GM12878 (cell line): ENCODE measurements at regions of chrX and their contacts with region 1.

Region 1: DNA sequence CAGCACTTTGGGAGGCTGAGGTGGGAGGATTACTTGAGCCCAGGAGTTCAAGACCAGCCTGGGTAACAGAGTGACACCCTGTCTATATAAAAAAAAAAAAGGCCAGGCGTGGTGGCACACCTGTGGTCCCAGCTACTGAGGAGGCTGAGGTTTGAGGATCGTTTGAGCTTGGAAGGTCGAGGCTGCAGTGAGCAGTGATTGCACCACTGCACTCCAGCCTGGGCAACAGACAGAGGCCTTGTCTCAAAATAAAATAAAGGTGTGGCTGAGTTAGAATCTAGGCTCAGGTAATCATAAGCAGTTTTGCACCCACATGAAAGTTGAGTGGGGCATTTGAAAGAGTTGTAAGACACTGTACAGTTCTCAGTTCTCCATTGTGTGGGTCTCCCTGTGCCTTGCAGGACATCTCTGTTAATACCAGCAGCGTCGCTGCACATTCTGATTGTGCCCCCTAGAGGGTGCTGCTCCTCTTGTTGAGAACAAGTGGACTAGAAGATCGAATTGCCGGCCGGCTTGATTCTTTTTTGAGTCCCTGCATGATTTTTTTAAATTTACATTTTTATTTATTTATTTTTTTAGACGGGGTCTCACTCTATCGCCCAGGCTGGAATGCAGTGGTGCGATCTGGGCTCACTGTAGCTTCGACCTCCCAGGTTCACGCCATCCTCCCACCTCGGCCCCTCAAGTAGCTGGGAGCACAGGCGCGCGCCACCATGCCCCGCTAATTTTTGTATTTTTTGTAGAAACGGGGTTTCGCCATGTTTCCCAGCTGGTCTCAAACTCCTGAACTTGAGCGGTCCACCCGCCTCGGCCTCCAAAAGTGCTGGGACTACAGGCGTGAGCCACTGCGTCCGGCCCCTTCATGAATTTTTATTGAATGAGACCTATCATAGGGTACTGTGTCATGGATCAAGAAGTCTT is 73.6 kb upstream of the RBMX start:
- DNase-seq: peak; percentile 30
- ATAC-seq: peak; percentile 99
- H3K4me3 ChIP-seq: no peak overlapping the region
- H3K27ac ChIP-seq: no peak overlapping the region
- H3K4me1 ChIP-seq: no peaks in the 10 kb centered on the region
- H3K27me3 ChIP-seq: no peaks in the 10 kb centered on the region
- CTCF ChIP-seq: peak; percentile 72 to 78 (median 73)
- EP300 ChIP-seq: no peak
- POLR2A ChIP-seq: no peak
- RAD21 ChIP-seq: peak; percentile 58

Region 2: DNA sequence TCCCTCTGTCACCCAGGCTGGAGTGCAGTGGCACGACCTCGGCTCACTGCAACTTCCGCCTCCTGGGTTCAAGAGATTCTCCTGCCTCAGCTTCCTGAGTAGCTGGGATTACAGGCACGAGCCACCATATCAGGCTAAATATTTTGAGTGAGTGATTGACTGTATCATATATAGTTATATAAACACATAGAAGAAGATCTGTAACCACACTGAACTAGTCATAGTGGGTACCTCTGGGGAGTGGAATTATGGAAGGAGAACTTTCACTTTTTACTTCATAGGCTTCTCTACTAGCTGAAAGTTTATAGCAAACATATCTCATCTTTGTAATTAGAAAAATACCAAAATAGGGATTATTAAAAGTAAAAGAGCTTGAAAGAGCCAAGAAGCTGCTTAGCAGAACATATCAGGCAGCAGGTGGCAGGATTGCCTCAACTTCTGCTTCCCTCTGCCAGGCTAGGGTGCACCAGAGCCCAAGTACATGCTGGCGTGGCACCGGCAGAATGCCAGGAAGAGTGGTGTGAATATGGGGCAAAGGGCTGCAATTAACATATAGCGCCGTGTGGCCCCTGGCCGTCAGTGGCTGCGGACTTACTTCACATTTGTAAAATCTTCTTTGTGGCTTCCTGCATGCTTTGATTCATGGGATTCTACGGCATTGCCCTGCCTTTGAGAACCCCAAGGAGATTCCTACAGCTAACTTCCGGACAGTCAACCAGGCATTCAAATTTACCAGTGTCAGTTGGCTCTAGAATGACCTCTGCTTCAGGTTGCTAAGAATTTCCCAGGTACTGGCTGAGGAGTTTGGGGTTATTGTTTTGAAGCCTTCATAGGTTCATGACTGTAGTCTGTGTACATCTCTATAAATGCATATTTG is 345.6 kb before region 1 on chrX:
- CTCF ChIA-PET with region 1: no interaction called
- POLR2A ChIA-PET with region 1: no interaction called
- RAD21 ChIA-PET with region 1: no interaction called
- SMC1A ChIA-PET with region 1: no interaction called
- in situ Hi-C with region 1: no loop called
- intact Hi-C with region 1: no loop called
- DNase-seq: no peak
- ATAC-seq: peak; percentile 80
- H3K4me3 ChIP-seq: no peak overlapping the region
- H3K27ac ChIP-seq: no peak overlapping the region
- H3K4me1 ChIP-seq: no peaks in the 10 kb centered on the region
- H3K27me3 ChIP-seq: no peaks in the 10 kb centered on the region
- CTCF ChIP-seq: peak; percentile 14 to 37 (median 29); a peak in 4 of 6 replicates
- EP300 ChIP-seq: no peak
- POLR2A ChIP-seq: no peak
- RAD21 ChIP-seq: peak; percentile 64

Region 3: GRCh38 chrX:137051978-137052642 is 98.0 kb after region 1 on chrX:
- CTCF ChIA-PET with region 1: interaction called, 16 read pairs
- POLR2A ChIA-PET with region 1: no interaction called
- RAD21 ChIA-PET with region 1: interaction called, 3 read pairs
- SMC1A ChIA-PET with region 1: interaction called, 3 read pairs
- in situ Hi-C with region 1: no loop called
- intact Hi-C with region 1: loop called (anchors 1 kb)
- DNase-seq: peak; percentile 1
- ATAC-seq: peak; percentile 99
- H3K4me3 ChIP-seq: peak overlapping the region; percentile 53; the same call in 1 of the 2 replicates
- H3K27ac ChIP-seq: no peak overlapping the region
- H3K4me1 ChIP-seq: no peaks in the 10 kb centered on the region
- H3K27me3 ChIP-seq: 0 out of 4 replicates have a peak, but pooled peaks cover 0 to 3% of the 10 kb centered on the region in 2 experiments
- CTCF ChIP-seq: peak; percentile 71 to 93 (median 82)
- EP300 ChIP-seq: no peak
- POLR2A ChIP-seq: no peak
- RAD21 ChIP-seq: peak; percentile 72

Region 4: DNA sequence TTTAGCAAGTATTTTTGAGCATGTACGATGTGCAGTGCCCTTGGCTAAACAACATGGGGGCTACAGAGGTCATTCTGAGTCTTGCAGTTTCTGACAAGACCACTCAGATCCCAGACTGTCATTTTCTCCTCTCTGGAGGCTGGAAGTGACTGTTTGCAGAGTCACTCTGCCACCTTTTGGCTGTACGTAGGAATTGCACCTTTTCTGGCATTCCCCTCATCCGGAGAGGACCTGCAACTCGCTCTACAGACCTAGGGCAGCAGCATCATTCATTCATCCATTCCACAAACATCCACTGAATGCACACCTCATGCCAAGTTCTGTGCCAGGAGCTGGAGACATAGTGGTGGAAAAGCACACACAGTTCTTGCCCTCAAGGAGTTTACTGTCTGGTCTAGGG is 240.0 kb after region 1 on chrX:
- CTCF ChIA-PET with region 1: interaction called, 3 read pairs
- POLR2A ChIA-PET with region 1: no interaction called
- RAD21 ChIA-PET with region 1: no interaction called
- SMC1A ChIA-PET with region 1: no interaction called
- in situ Hi-C with region 1: loop called (anchors 10 kb)
- intact Hi-C with region 1: loop called (anchors 1 kb)
- DNase-seq: peak; percentile 1
- ATAC-seq: peak; percentile 77
- H3K4me3 ChIP-seq: no peak overlapping the region
- H3K27ac ChIP-seq: no peak overlapping the region
- H3K4me1 ChIP-seq: no peaks in the 10 kb centered on the region
- H3K27me3 ChIP-seq: no peaks in the 10 kb centered on the region
- CTCF ChIP-seq: peak; percentile 54 to 64 (median 59); a peak in 5 of 6 replicates
- EP300 ChIP-seq: no peak
- POLR2A ChIP-seq: no peak
- RAD21 ChIP-seq: peak; percentile 62

Region 5: GRCh38 chrX:138026211-138026610 is 1072.1 kb after region 1 on chrX:
- CTCF ChIA-PET with region 1: no interaction called
- POLR2A ChIA-PET with region 1: no interaction called
- RAD21 ChIA-PET with region 1: no interaction called
- SMC1A ChIA-PET with region 1: no interaction called
- in situ Hi-C with region 1: no loop called
- intact Hi-C with region 1: loop called (anchors 10 kb)
- DNase-seq: no peak
- ATAC-seq: peak; percentile 82
- H3K4me3 ChIP-seq: no peak overlapping the region
- H3K27ac ChIP-seq: no peak overlapping the region
- H3K4me1 ChIP-seq: no peaks in the 10 kb centered on the region
- H3K27me3 ChIP-seq: no peaks in the 10 kb centered on the region
- CTCF ChIP-seq: peak; percentile 46 to 52 (median 50); a peak in 4 of 6 replicates
- EP300 ChIP-seq: no peak
- POLR2A ChIP-seq: no peak
- RAD21 ChIP-seq: peak; percentile 34; the same call in 1 of the 2 replicates